Activated CD8-positive, alpha-beta memory T cell treated with anti-CD3 and anti-CD28 coated beads, Interleukin-2, amount 10 ng/mL, durations not matched to agents 7 days and 5 days (primary cell): ENCODE measurements at regions of chr15 and their contacts with region 1.

Region 1: DNA sequence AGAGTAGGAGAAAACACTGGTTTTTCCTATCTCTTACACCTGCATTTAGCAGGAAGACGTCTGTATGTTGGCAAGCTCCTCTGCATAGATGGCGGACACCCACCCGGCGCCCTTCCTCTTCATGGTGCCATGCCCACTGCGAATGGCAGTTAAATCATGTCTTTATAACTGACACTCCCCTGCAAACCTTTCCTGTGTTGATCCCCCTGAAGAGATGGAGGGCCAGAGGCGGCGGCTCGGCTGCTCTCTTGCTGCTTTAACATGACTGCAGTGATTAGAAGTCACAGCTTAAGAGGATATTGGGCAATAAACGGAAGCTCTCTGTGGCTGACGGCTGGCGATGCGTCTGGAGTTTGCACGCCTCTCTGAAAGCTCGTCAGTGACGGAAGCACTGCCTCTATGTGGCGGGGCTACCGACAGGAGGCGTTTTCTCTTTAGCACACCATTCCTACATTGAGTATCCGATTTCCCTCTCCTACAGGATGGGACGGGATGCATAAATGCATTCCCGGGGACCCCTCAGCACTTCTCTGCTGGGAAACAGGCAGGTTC is 25.5 kb upstream of the SNRPA1 start:
- DNase-seq: peak; percentile 90
- ATAC-seq: peak; percentile 99
- H3K4me3 Mint-ChIP-seq: peak overlapping the region; percentile 75
- H3K27ac Mint-ChIP-seq: peak overlapping the region; percentile 89
- H3K4me1 Mint-ChIP-seq: peaks cover 16% of the 10 kb centered on the region
- H3K27me3 Mint-ChIP-seq: peaks cover 9% of the 10 kb centered on the region

Region 2: DNA sequence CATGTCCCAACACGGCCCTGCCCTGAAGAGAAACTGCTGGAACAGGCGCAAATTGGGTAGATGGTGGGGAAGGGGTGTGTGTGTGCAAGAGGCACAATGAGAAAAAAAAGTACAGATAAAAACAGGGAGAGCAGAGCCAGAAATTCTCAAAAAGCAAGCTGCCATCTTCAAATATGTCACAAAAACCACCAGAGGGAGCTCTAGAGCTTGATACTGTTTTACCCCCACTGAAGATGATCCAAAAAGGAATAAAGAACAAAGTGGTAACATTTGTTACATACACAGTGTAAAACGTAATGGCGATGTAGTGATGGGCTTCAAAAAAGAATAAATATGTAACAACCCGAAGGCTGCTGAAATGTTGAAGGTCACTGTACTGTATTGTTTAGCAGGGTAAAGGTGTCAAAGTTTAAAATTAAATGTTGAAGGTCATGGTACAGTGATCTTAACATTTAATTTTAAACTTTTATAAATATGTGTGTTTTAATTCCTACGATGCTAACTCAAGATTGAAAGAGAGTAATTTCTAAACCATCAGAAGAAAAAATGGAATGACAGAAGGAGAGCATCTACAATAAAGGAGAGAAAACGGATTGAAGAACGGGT is 31.6 kb before region 1 on chr15:
- CTCF ChIA-PET with region 1: interaction called, 15 read pairs
- DNase-seq: no peak
- ATAC-seq: peak; percentile 52
- H3K4me3 Mint-ChIP-seq: no peak overlapping the region
- H3K27ac Mint-ChIP-seq: peak overlapping the region; percentile 70
- H3K4me1 Mint-ChIP-seq: peaks cover 61% of the 10 kb centered on the region
- H3K27me3 Mint-ChIP-seq: no peaks in the 10 kb centered on the region

Region 3: DNA sequence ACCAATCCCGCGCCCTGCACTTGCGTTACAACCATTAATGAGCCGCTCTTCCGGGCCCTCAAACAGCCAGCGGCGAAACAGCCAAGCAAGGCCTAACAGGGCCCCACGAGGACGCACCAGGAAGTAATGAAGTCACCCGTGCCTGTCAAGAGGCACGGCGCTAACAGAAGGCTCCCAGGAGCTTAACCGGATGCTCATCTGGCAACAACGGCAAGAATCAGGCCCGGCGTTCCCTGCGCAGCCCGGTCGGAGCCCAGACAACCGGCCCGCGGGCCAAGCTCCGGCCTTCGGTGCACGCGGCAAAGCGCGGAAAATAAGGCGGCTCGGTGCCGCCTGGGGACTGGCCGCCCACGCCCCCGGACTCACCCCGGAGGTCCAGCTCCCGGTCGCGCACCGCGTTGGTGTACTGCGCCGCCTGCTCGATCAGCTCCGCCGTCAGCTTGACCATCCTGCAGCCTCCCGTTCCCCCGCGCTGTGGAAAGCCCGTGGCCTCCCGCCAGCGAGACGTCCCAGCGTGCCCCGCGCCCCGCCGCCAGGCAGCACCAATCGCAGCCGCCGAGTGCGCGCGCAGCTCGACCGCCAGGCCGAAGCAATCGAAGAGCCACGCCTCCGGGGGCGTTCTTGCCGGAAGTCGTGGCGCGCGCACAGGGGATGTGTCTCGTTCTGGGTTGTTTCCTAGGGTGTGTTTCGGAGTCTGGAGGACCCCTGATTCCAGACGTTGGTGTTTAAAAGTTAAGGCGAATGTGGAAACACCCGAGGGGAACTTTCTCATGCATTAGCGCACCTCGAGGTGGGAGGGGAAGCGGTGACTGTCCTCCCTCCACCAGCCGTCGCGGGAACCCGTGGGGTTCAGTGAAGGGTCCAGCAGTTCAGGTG is 25.6 kb before region 1 on chr15 and contains the start of gene SNRPA1:
- CTCF ChIA-PET with region 1: interaction called, 40 read pairs
- DNase-seq: peak; percentile 97
- ATAC-seq: peak; percentile 89
- H3K4me3 Mint-ChIP-seq: peak within 1 kb of the TSS; percentile 95
- H3K27ac Mint-ChIP-seq: peak within 1 kb of the TSS; percentile 94
- H3K4me1 Mint-ChIP-seq: peaks cover 44% of the 10 kb centered on the region
- H3K27me3 Mint-ChIP-seq: no peaks in the 10 kb centered on the region
- total RNA-seq, gene SNRPA1: 132 to 151 TPM

Region 4: DNA sequence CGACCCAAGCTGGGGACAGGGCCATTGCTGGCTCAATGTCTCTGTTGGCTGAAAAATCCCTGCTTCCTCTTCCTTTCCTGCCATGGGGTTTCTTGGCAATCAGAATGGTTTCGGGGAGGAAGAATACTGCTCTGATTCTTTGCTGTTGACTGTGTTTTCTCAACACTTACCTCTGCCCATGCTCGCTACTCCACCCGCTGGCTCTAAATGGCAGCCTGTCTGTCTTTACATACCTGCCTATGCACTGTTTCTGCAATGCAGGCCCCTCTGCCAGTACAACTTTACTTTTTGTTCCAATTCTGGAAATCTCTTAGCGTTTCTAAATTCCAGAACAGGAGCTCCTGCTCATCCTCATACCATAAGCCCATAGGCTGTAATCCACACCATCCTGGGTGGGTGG is 12.8 kb after region 1 on chr15:
- CTCF ChIA-PET with region 1: interaction called, 28 read pairs
- DNase-seq: no peak
- ATAC-seq: no peak
- H3K4me3 Mint-ChIP-seq: no peak overlapping the region
- H3K27ac Mint-ChIP-seq: peak overlapping the region; percentile 95
- H3K4me1 Mint-ChIP-seq: peaks cover 18% of the 10 kb centered on the region
- H3K27me3 Mint-ChIP-seq: no peaks in the 10 kb centered on the region